ENCODE measurements at regions of chr17 and their contacts with region 1.

Region 1: GRCh38 chr17:40559954-40560591 is 5.2 kb downstream of the CCR7 start:
- DNase-seq: peak; percentile 91
- ATAC-seq: peak; percentile 80

Region 2: GRCh38 chr17:40358323-40359038 is 201.6 kb before region 1 on chr17:
- intact Hi-C with region 1: loop called (anchors 2 kb)
- DNase-seq: peak; percentile 96
- ATAC-seq: peak; percentile 74

Region 3: DNA sequence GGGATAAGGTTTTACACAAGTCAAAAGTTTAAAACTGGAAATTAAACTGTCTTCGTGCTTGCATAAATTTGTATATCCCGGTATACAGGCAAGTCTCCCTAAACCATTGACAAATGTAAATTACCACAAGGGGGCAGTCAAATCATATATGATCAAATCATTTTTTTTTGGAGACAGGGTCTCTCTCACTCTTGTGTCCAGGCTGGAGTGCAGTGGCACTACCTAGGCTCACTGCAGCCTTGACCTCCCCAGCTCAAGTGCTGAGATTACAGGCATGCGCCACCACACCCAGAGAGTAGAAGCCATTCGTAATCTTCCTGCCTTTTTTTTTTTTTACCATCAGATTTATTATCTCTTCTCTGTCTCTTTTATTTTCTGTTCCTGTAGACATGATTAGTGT is 160.9 kb before region 1 on chr17:
- intact Hi-C with region 1: loop called (anchors 1 kb)
- DNase-seq: no peak
- ATAC-seq: peak; percentile 28

Region 4: DNA sequence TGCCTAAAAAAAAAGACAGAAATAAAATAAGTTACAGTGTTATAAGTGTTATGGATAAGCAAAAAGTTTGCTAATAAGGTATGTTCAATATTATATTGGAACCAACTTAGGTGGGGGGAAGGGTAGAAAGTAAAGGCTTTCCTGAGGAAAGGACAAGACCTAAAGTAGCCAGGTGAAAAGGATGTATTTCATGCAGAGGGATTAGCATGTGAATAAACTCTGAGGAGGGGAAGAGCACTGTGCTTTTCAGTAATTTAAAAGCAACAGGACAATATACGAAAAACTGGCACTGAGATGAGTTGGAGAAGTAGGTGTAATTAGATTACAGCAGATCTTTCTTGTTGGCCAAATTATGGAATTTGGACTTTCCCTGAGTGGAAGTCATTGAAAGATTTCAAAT is 150.0 kb before region 1 on chr17:
- intact Hi-C with region 1: no loop called
- DNase-seq: no peak
- ATAC-seq: no peak

Region 5: GRCh38 chr17:40443583-40444327 is 116.3 kb before region 1 on chr17:
- intact Hi-C with region 1: loop called (anchors 1 kb)
- DNase-seq: peak; percentile 92
- ATAC-seq: peak; percentile 51

Region 6: DNA sequence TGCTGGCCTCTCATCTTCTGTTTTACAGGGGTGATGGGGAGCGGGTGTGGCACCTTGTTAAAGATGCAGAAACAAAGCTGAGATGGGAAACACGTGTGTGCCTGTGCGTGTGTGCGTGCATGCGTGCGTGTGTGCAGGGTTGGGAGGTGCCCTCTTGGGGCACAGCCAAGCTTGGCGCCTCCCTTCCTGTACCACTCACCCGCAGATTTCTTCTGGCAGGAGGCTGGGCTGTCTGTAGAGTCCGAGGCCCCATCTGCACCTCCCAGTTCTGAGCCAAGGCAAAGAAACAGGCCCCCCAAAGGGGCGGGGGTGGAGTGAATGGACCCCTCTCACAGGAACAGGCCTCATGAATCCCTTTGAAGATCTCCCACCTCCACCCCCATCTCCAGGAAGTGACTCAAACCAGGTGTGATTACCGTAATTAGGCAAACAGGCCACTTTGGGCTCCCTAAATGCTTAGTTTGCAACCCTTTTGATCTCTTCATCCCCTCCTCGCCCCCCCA is 79.5 kb before region 1 on chr17:
- intact Hi-C with region 1: loop called (anchors 1 kb)
- DNase-seq: no peak
- ATAC-seq: no peak

Region 7: DNA sequence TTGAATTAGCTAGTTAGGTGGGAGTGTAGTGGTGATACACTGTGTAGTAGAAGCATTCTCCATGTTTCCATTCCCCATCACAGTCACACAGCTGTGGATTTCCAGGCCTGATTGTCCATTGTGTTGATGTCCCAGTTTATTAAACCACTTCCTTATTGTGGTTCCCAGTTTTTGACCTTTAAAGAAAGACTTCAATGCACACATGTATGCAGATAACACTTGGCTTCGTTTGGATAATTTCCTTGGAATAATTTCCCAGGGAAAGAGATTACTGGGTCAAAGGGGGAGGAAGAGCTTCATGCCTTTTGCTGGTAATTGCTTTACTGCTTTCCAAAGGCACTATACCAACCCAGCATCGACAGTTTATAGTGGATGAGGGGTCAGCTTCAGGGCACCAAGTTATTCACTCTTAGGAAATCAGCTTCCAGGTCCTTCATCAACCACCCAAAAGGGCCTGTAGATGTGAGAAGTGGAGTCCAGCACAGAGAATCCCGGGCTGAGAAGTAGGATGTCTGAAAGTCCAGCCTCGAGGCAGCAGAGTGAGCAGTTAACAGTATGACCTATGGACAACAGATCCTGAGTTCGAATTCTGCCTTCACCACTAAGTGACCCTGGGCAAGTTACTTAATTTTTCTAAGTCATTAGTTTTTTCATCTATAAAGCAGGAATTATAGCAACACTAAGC is 27.4 kb before region 1 on chr17:
- intact Hi-C with region 1: loop called (anchors 1 kb)
- DNase-seq: no peak
- ATAC-seq: peak; percentile 30

Region 8: GRCh38 chr17:40803617-40804082 is 243.6 kb after region 1 on chr17:
- intact Hi-C with region 1: no loop called
- DNase-seq: peak; percentile 87
- ATAC-seq: peak; percentile 81

Measured in Right ventricle myocardium inferior (tissue), 1 donor.